ENCODE measurements at regions of chr6 and their contacts with region 1.

Region 1: GRCh38 chr6:27902335-27903314 is 9.6 kb downstream of the OR2B2 start:
- DNase-seq: peak; percentile 75 to 94 (median 90)
- ATAC-seq: peak; percentile 92
- H3K4me3 ChIP-seq: peak overlapping the region; percentile 95
- H3K4me3 Mint-ChIP-seq: peak overlapping the region; percentile 75 to 97 (median 91)
- H3K27ac ChIP-seq: peak overlapping the region; percentile 82
- H3K27ac Mint-ChIP-seq: peak overlapping the region; percentile 95 to 99 (median 99)
- H3K4me1 ChIP-seq: peaks cover 0 to 3% of the 10 kb centered on the region in 2 donors
- H3K4me1 Mint-ChIP-seq: peaks cover 0 to 26% (median 15%) of the 10 kb centered on the region in 7 donors
- H3K27me3 ChIP-seq: no peaks in the 10 kb centered on the region
- H3K27me3 Mint-ChIP-seq: peaks cover 4 to 35% (median 13%) of the 10 kb centered on the region in 5 donors

Region 2: DNA sequence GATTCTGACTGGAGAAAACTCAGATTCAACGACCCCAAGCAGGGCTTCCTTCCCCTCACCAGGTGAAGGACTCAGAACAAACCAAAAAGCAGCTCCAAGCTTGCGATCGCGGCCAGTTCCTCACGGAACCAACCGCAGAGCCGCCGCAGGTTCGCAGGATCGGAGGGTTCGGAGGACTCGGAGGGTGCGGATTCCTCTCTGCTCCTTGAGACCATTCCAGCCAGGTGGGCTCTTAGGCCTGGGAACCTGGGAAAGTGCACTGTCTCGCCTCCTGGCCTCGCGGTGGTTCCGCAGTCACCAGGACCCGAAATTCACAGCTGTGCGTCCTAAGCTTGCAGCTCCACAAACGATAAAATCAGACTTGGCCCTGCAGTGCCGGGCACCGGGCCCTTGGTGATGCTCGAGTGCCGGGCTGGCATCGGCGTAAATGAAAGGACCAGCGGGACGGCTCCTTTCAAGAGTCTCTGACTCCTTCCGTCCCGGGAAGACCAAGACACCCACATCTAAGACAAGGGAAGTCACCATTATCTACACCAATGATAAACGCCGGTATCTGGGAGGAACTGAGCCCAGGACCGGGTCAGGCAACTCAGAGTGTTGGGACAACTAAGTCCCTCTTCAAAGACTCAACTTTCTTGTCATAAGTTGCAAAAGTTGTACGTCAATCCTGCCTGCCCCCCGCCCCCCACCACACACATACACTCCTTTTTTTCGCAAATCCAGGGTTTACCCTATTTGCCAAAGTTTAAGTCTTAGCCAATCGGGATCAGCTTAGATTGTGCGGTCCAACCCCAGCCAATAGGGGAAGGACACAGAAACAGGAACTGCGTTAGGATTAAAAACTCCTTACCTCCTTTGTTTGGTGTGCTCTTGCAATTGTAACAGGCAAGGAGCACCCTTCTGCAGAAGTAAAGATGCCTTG is 724.9 kb before region 1 on chr6:
- CTCF ChIA-PET with region 1: no interaction called
- POLR2A ChIA-PET with region 1: interaction called, 5 read pairs
- intact Hi-C with region 1: loop called in 1 of 2 experiments (anchors 1 kb)
- DNase-seq: peak; percentile 49 to 78 (median 66)
- ATAC-seq: peak; percentile 83
- H3K4me3 ChIP-seq: peak overlapping the region; percentile 99
- H3K4me3 Mint-ChIP-seq: peak overlapping the region; percentile 90 to 98 (median 96)
- H3K27ac ChIP-seq: peak overlapping the region; percentile 74
- H3K27ac Mint-ChIP-seq: peak overlapping the region; percentile 79 to 100 (median 95)
- H3K4me1 ChIP-seq: peaks cover 0 to 3% of the 10 kb centered on the region in 2 donors
- H3K4me1 Mint-ChIP-seq: peaks cover 0 to 33% (median 14%) of the 10 kb centered on the region in 7 donors
- H3K27me3 ChIP-seq: no peaks in the 10 kb centered on the region
- H3K27me3 Mint-ChIP-seq: peaks cover 0 to 37% (median 0%) of the 10 kb centered on the region in 5 donors

Region 3: DNA sequence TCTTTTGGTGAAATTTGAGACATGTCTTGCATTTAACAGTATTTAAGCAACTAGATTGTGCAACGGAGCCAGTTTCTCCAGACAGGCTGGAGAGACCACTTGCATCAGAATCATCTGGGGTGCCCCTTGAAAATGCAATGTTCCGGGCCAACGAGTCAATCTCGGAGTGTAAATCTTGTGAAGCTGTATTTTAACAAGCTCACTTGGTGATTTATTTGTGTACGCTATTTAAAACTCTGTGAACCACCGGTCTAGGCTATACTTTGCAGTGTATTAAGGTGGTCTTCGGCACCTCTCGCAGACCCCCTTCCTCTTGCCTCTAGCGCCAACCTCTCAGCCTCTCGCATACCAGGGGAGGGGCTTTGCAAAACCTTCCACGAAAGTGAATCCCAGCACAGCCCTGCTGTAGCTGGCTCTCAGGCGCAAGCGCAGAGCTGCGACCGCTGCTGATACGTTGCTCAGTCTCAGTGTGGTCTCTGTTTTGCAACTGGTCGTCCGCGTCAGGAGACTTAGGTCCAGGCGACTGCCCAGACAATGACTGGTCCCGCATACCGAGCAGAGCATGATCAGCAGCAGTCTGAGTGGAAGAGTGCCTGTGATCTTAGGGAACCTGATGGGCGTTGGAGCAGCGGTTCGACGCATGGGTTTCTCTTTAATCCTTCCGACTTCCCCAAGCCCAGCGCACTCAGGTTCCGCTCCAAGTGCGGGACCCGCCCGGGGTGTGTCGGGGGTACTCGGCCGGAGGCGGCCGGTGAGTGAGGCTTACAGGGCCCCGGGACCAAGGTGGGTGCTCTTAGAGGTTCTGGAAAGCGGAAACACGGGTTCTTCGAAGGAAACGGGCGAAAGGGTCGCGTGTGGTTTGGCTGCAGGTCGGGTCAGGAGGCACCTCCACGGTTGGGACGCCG is 514.1 kb before region 1 on chr6 and contains the start of gene ZNF391:
- CTCF ChIA-PET with region 1: no interaction called
- POLR2A ChIA-PET with region 1: no interaction called
- intact Hi-C with region 1: loop called in 1 of 2 experiments (anchors 5 kb)
- DNase-seq: peak; percentile 46 to 77 (median 67)
- ATAC-seq: peak; percentile 90
- H3K4me3 ChIP-seq: peak within 1 kb of the TSS; percentile 92
- H3K4me3 Mint-ChIP-seq: peak within 1 kb of the TSS; percentile 95 to 99 (median 98)
- H3K27ac ChIP-seq: peak within 1 kb of the TSS; percentile 78
- H3K27ac Mint-ChIP-seq: peak within 1 kb of the TSS; percentile 85 to 96 (median 93)
- H3K4me1 ChIP-seq: peaks cover 4 to 9% of the 10 kb centered on the region in 2 donors
- H3K4me1 Mint-ChIP-seq: peaks cover 9 to 31% (median 18%) of the 10 kb centered on the region in 7 donors
- H3K27me3 ChIP-seq: no peaks in the 10 kb centered on the region
- H3K27me3 Mint-ChIP-seq: peaks cover 0 to 9% (median 2%) of the 10 kb centered on the region in 5 donors
- total RNA-seq, gene ZNF391: 0.19 to 5.7 (median 3.3) TPM

Region 4: GRCh38 chr6:27687154-27688013 is 215.2 kb before region 1 on chr6:
- CTCF ChIA-PET with region 1: no interaction called
- POLR2A ChIA-PET with region 1: no interaction called
- intact Hi-C with region 1: loop called (anchors 1 to 5 kb)
- DNase-seq: peak; percentile 57 to 79 (median 65)
- ATAC-seq: peak; percentile 81
- H3K4me3 ChIP-seq: peak overlapping the region; percentile 88
- H3K4me3 Mint-ChIP-seq: peak overlapping the region; percentile 87 to 96 (median 94)
- H3K27ac ChIP-seq: peak overlapping the region; percentile 61
- H3K27ac Mint-ChIP-seq: peak overlapping the region; percentile 86 to 100 (median 97)
- H3K4me1 ChIP-seq: peaks cover 4 to 6% of the 10 kb centered on the region in 2 donors
- H3K4me1 Mint-ChIP-seq: peaks cover 7 to 40% (median 27%) of the 10 kb centered on the region in 7 donors
- H3K27me3 ChIP-seq: no peaks in the 10 kb centered on the region
- H3K27me3 Mint-ChIP-seq: peaks cover 5 to 34% (median 5%) of the 10 kb centered on the region in 5 donors

Region 5: DNA sequence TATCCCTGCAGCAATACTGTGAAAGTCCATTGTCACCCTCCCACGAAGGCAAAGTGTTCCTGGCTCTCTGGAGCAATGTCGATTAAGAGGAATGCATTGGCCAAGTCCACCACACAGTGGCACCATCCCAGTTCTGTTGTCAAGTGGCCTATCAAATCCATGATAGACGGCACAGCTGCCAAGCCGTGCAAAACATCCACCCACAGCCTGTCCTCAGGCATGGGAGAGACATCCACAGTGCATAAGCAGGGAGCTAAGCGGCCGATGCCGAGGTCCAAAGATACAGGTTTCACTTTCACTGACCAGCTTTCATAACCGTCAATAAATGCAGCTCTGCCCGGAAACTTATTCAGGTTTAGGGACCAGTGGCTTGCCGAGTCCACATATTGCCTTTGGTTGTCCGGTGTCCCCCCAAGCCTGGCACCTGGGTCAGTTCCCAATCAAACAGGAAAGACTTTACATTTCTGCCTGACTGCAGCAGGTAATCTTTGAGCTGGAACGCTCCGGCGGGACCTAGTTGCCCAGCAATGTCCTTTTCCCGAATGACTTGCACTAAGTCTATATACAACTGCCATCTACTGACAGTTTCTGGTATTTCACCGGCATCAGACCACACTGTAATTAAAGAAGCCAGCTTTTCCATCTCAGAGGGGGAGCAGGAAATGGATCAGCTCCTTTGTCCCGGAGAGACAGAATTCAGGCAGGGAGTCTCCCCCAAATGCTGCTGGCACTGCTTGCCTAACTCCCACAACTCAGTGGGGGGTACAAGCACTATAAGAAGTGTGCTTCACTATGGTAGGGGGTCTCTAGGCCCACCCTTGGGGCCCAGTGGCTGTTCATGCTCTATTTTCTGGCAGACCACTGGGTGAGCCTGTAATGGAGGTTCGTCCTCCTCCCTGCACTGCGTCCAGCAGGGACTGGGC is 453.4 kb after region 1 on chr6:
- CTCF ChIA-PET with region 1: no interaction called
- POLR2A ChIA-PET with region 1: no interaction called
- intact Hi-C with region 1: loop called (anchors 2 kb)
- DNase-seq: peak; percentile 26 to 69 (median 54)
- ATAC-seq: peak; percentile 92
- H3K4me3 ChIP-seq: peak overlapping the region; percentile 69
- H3K4me3 Mint-ChIP-seq: peak overlapping the region; percentile 78 to 96 (median 92)
- H3K27ac ChIP-seq: no peak overlapping the region
- H3K27ac Mint-ChIP-seq: peak overlapping the region; percentile 21 to 89 (median 62)
- H3K4me1 ChIP-seq: peaks cover 0 to 7% of the 10 kb centered on the region in 2 donors
- H3K4me1 Mint-ChIP-seq: peaks cover 16 to 38% (median 34%) of the 10 kb centered on the region in 7 donors
- H3K27me3 ChIP-seq: no peaks in the 10 kb centered on the region
- H3K27me3 Mint-ChIP-seq: no peaks in the 10 kb centered on the region

Region 6: GRCh38 chr6:28981833-28982475 is 1079.3 kb after region 1 on chr6:
- CTCF ChIA-PET with region 1: no interaction called
- POLR2A ChIA-PET with region 1: no interaction called
- intact Hi-C with region 1: loop called in 1 of 2 experiments (anchors 2 kb)
- DNase-seq: peak; percentile 48 to 89 (median 86)
- ATAC-seq: peak; percentile 81
- H3K4me3 ChIP-seq: peak overlapping the region; percentile 99
- H3K4me3 Mint-ChIP-seq: peak overlapping the region; percentile 85 to 100 (median 92)
- H3K27ac ChIP-seq: peak overlapping the region; percentile 47
- H3K27ac Mint-ChIP-seq: peak overlapping the region; percentile 87 to 100 (median 99)
- H3K4me1 ChIP-seq: peaks cover 7 to 18% of the 10 kb centered on the region in 2 donors
- H3K4me1 Mint-ChIP-seq: peaks cover 30 to 80% (median 66%) of the 10 kb centered on the region in 7 donors
- H3K27me3 ChIP-seq: no peaks in the 10 kb centered on the region
- H3K27me3 Mint-ChIP-seq: peaks cover 14 to 61% (median 36%) of the 10 kb centered on the region in 5 donors

Region 7: DNA sequence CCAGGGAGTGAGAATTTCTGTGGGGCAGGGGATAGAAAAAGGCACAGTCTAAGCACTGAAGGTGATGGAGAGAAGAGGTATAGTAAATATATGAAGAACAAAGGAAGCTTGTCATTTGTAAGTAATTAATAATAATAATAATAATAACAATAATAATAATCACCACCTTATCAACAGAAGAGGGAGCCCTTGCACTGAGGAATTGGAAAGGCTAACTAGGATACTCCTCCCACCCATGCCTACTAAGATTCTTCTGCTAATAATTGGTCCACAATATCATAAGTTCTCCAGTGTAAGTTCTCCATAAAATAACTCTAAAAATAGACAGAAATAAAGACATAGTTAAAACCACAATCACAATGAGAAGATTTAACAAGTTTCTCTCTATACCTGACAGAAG is 1473.4 kb after region 1 on chr6:
- CTCF ChIA-PET with region 1: no interaction called
- POLR2A ChIA-PET with region 1: no interaction called
- intact Hi-C with region 1: no loop called
- DNase-seq: no peak
- ATAC-seq: no peak
- H3K4me3 ChIP-seq: no peak overlapping the region
- H3K4me3 Mint-ChIP-seq: no peak overlapping the region
- H3K27ac ChIP-seq: no peak overlapping the region
- H3K27ac Mint-ChIP-seq: no peak overlapping the region
- H3K4me1 ChIP-seq: no peaks in the 10 kb centered on the region
- H3K4me1 Mint-ChIP-seq: no peaks in the 10 kb centered on the region
- H3K27me3 ChIP-seq: no peaks in the 10 kb centered on the region
- H3K27me3 Mint-ChIP-seq: peaks cover 7 to 70% (median 39%) of the 10 kb centered on the region in 5 donors